ENCODE measurements at regions of chr4 and their contacts with region 1.

Region 1: DNA sequence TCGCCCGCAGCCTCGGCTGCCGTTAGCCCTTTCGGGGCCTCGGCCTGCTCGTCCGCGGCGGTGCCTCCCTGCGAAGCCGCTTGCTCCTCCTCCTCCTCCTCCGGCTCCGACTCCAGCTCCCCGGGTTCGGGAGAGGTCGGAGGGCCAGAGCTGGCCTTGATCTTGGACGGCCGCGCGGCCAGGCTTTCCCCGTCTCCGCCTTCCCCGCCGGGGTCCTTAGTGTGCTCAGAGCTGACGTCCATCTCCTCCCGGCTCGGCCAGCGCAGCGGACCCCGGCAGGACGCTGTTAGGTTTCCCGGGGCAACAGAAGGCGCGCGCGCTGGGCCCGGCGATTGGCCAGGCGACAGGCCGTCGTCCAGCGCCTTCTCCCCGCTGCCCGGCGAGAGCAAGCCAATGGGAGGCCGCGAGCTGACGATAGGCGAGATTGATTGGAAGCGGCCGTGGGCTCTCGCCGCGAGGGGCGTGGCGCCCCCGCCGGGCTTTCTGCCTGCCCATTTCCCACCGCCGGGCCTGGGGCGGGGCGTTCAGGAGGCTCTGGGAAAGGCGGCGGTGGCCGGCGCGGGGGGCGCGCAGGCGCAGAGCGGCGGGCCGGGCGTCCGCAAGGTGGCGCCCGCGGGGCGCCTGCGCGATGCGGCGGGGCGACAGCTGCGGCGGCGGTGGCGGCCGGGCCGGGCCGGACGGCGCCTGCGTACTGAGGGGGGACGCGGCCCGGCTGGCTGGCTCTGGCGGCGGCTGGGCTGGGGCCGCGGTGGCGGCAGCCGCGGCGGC is at the start of gene TADA2B:
- DNase-seq: peak; percentile 97
- ATAC-seq: peak; percentile 90
- H3K4me3 Mint-ChIP-seq: peak within 1 kb of the TSS; percentile 83
- H3K27ac Mint-ChIP-seq: no peak within 1 kb of the TSS; the same call in 1 of the 2 replicates
- H3K4me1 Mint-ChIP-seq: peaks cover 42% of the 10 kb centered on the region
- H3K27me3 Mint-ChIP-seq: peaks cover 30% of the 10 kb centered on the region
- CTCF ChIP-seq: no peak; the same call in 1 of the 2 replicates
- total RNA-seq, gene TADA2B: 12.2 to 14.3 TPM (median 13.1 TPM) in 3 replicates

Region 2: GRCh38 chr4:6647582-6648230 is 395.2 kb before region 1 on chr4:
- CTCF ChIA-PET with region 1: no interaction called
- POLR2A ChIA-PET with region 1: no interaction called
- DNase-seq: no peak
- ATAC-seq: no peak
- H3K4me3 Mint-ChIP-seq: no peak overlapping the region
- H3K27ac Mint-ChIP-seq: peak overlapping the region; percentile 12; the same call in 1 of the 2 replicates
- H3K4me1 Mint-ChIP-seq: peaks cover 6% of the 10 kb centered on the region
- H3K27me3 Mint-ChIP-seq: peaks cover 3% of the 10 kb centered on the region
- CTCF ChIP-seq: no peak

Region 3: GRCh38 chr4:6909073-6909965 is 133.6 kb before region 1 on chr4 and contains the start of gene TBC1D14:
- CTCF ChIA-PET with region 1: interaction called, 13 read pairs
- POLR2A ChIA-PET with region 1: interaction called, 4 read pairs
- DNase-seq: peak; percentile 85
- ATAC-seq: peak; percentile 83
- H3K4me3 Mint-ChIP-seq: peak within 1 kb of the TSS; percentile 95
- H3K27ac Mint-ChIP-seq: peak within 1 kb of the TSS; percentile 69
- H3K4me1 Mint-ChIP-seq: peaks cover 33% of the 10 kb centered on the region
- H3K27me3 Mint-ChIP-seq: peaks cover 12% of the 10 kb centered on the region
- CTCF ChIP-seq: no peak
- total RNA-seq, gene TBC1D14: 42.4 to 45.1 TPM (median 43.4 TPM) in 3 replicates

Region 4: GRCh38 chr4:6974138-6974848 is 68.6 kb before region 1 on chr4:
- CTCF ChIA-PET with region 1: interaction called, 26 read pairs
- POLR2A ChIA-PET with region 1: no interaction called
- DNase-seq: peak; percentile 95
- ATAC-seq: peak; percentile 80
- H3K4me3 Mint-ChIP-seq: no peak overlapping the region
- H3K27ac Mint-ChIP-seq: peak overlapping the region; percentile 78
- H3K4me1 Mint-ChIP-seq: peaks cover 37% of the 10 kb centered on the region
- H3K27me3 Mint-ChIP-seq: no peaks in the 10 kb centered on the region
- CTCF ChIP-seq: peak; percentile 95

Region 5: DNA sequence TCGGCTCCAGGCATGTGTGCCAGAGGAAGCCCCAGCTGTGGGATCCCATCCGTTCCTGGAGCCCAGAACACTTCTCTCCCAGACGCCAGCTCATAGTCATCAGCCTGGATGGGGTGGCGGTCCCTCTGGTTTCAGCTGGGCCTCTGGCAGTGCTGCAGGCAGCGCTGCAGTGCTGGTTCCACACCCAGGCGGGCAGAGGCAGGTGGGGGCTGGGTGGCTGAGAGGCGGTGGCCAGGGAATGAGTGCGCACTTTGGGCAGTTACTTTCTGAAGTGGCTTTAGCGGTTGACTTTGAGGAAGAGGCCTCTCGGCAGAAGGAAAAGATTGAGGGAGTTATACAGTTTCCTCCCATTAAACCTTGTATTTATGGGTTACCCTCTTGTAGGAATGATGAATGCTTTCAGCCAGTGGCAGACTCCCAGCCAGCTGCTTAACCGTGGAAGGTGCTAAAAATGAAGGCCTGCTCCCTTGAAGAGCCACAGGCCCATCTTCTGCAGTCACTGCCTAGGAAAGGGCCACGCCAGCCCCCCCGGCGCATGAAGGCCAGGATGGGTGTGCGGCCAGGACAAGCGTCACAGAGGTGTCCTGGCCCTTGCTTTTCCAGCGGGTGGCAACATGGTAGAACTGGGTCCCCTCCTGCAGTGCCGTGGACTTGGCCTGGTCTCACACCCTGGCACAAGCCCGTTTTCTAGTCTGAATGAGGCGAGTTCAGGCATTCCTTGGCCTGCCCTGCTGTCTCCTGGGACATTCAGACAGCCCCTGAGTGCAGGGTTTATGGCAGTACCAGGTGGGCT is 10.2 kb after region 1 on chr4:
- CTCF ChIA-PET with region 1: interaction called, 25 read pairs
- POLR2A ChIA-PET with region 1: interaction called, 3 read pairs
- DNase-seq: no peak
- ATAC-seq: no peak
- H3K4me3 Mint-ChIP-seq: no peak overlapping the region
- H3K27ac Mint-ChIP-seq: no peak overlapping the region
- H3K4me1 Mint-ChIP-seq: peaks cover 4% of the 10 kb centered on the region
- H3K27me3 Mint-ChIP-seq: no peaks in the 10 kb centered on the region
- CTCF ChIP-seq: no peak

Region 6: GRCh38 chr4:7081891-7082471 is 39.1 kb after region 1 on chr4:
- CTCF ChIA-PET with region 1: interaction called, 25 read pairs
- POLR2A ChIA-PET with region 1: interaction called, 3 read pairs
- DNase-seq: peak; percentile 78
- ATAC-seq: peak; percentile 97
- H3K4me3 Mint-ChIP-seq: no peak overlapping the region
- H3K27ac Mint-ChIP-seq: no peak overlapping the region
- H3K4me1 Mint-ChIP-seq: peaks cover 4% of the 10 kb centered on the region
- H3K27me3 Mint-ChIP-seq: peaks cover 73% of the 10 kb centered on the region
- CTCF ChIP-seq: 0 out of 2 replicates have a peak, but pooled peaks have one; percentile 20

Measured in WTC11 (cell line).